ENCODE measurements at regions of chr21 and their contacts with region 1.

Region 1: GRCh38 chr21:32403201-32403777 is 9.2 kb upstream of the EVA1C start:
- DNase-seq: peak in 2 of 3 donors; percentile 17 to 37
- H3K4me3 ChIP-seq: no peak overlapping the region
- H3K4me3 Mint-ChIP-seq: peak overlapping the region in 1 of 2 donors; percentile 31
- H3K27ac ChIP-seq: no peak overlapping the region
- H3K27ac Mint-ChIP-seq: no peak overlapping the region
- H3K4me1 ChIP-seq: no peaks in the 10 kb centered on the region
- H3K4me1 Mint-ChIP-seq: no peaks in the 10 kb centered on the region
- H3K27me3 ChIP-seq: peaks cover 0 to 7% of the 10 kb centered on the region in 2 donors
- H3K27me3 Mint-ChIP-seq: peaks cover 8 to 17% (median 14%) of the 10 kb centered on the region in 3 donors
- CTCF ChIP-seq: peak; percentile 61

Region 2: GRCh38 chr21:32359711-32360260 is 43.5 kb before region 1 on chr21:
- intact Hi-C with region 1: loop called in 1 of 2 experiments (anchors 10 kb)
- DNase-seq: no peak
- H3K4me3 ChIP-seq: no peak overlapping the region
- H3K4me3 Mint-ChIP-seq: no peak overlapping the region
- H3K27ac ChIP-seq: no peak overlapping the region
- H3K27ac Mint-ChIP-seq: peak overlapping the region in 2 of 7 donors; percentile 4 to 14
- H3K4me1 ChIP-seq: no peaks in the 10 kb centered on the region
- H3K4me1 Mint-ChIP-seq: peaks cover 3% of the 10 kb centered on the region
- H3K27me3 ChIP-seq: no peaks in the 10 kb centered on the region
- H3K27me3 Mint-ChIP-seq: peaks cover 0 to 2% (median 0%) of the 10 kb centered on the region in 3 donors
- CTCF ChIP-seq: no peak

Region 3: DNA sequence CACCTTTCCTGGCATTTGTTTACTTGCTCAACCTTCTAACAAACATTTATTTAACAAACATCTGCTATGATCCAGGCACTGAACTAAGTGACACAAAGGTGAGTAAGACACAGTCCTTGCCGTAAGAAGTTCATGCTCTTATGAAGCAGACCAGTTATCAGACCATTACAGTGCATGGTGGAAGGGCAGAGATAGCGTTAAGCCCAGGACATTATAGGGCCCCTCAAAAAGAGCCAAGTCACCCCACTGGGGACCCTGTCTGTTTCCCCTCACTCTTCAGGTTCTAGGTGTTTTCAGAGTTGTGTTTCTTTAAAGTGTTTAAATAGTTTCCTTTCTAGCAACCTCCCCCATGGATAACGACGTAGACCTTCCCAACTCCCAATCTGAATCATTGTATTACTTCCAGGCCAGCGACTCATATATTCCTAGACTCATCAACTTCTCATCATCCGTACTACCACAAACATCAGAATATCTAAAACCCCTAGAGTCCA is 142.7 kb after region 1 on chr21:
- intact Hi-C with region 1: no loop called
- DNase-seq: no peak
- H3K4me3 ChIP-seq: no peak overlapping the region
- H3K4me3 Mint-ChIP-seq: no peak overlapping the region
- H3K27ac ChIP-seq: no peak overlapping the region
- H3K27ac Mint-ChIP-seq: no peak overlapping the region
- H3K4me1 ChIP-seq: no peaks in the 10 kb centered on the region
- H3K4me1 Mint-ChIP-seq: no peaks in the 10 kb centered on the region
- H3K27me3 ChIP-seq: no peaks in the 10 kb centered on the region
- H3K27me3 Mint-ChIP-seq: peaks cover 0 to 6% (median 5%) of the 10 kb centered on the region in 3 donors
- CTCF ChIP-seq: no peak

Region 4: DNA sequence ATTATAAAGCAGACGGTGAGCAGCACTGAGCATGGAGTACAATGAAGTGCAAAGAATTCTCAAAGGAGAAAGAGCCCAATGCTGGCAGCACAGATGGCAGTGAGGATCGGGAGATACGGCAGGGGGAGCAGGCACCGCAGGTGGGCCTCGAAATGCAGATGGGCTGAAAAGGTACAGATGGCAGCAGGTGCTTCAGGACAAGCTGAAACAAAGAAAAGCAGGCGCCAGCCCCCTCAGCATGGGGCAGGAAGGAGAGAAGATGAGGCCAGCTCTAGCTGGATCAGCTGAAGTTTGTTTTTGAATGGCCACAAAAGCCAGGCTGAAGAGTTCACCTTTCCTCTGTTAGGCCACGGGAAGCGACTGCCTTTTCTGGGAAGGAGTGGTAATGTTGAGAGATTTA is 201.2 kb after region 1 on chr21:
- intact Hi-C with region 1: loop called (anchors 5 to 10 kb)
- DNase-seq: no peak
- H3K4me3 ChIP-seq: no peak overlapping the region
- H3K4me3 Mint-ChIP-seq: no peak overlapping the region
- H3K27ac ChIP-seq: no peak overlapping the region
- H3K27ac Mint-ChIP-seq: peak overlapping the region in 2 of 7 donors; percentile 2 to 17
- H3K4me1 ChIP-seq: no peaks in the 10 kb centered on the region
- H3K4me1 Mint-ChIP-seq: no peaks in the 10 kb centered on the region
- H3K27me3 ChIP-seq: no peaks in the 10 kb centered on the region
- H3K27me3 Mint-ChIP-seq: no peaks in the 10 kb centered on the region
- CTCF ChIP-seq: no peak